AG04450 (cell line): ENCODE measurements at regions of chr19 and their contacts with region 1.

Region 1: DNA sequence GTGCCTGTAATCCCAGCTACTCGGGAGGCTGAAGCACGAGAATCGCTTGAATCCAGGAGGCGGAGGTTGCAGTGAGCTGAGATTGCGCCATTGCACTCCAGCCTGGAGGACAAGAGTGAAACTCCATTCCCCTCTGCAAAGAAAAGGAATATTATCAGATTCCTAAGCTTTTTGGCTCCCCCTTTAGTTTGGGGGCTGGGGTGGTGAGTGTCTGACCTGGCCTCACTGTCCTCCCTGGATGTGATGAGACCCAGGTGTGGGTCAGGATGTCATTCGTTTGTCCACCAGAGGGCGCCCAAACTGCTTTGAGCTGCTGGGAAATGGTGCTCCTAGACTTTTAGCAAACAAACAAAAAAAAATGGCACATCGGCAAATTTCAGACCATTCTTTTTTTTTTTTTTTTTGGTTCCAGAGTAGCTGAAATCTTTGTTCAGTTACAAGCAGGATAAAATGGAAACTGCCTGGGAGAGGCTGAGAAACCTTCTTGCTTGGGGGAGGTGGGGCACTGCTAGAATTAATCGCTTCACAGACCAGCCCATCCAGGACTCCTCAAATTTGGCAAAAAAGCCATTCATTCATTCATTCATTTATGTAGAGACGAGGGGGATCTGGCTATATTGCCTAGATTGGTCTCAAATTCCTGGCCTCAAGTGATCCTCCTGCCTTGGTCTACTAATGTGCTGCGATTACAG is 29.4 kb downstream of the SPC24 start:
- DNase-seq: peak; percentile 34
- H3K4me3 ChIP-seq: no peak overlapping the region
- H3K27ac ChIP-seq: no peak overlapping the region
- H3K27me3 ChIP-seq: no peaks in the 10 kb centered on the region
- CTCF ChIP-seq: peak; percentile 83

Region 2: DNA sequence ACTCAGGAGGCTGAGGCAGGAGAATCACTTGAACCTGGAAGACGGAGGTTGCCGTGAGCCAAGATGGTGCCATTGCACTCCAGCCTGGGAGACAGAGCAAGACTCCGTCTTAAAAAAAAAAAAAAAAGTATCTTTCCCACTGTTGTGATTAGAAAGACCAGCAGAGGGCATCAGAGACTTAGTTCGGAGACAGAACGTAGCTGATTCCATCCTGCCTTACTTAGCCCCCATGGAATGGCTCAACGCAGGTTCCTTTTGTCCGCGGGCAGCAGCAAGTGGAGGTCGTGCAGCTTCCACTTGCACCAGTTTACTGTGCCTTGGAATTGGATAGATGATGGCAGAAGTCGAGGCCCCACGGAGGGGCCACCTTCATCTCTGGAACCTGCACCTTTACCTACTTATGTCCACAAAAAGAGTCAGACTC is 189.5 kb before region 1 on chr19:
- CTCF ChIA-PET with region 1: interaction called, 22 read pairs
- POLR2A ChIA-PET with region 1: no interaction called
- DNase-seq: peak; percentile 71
- H3K4me3 ChIP-seq: no peak overlapping the region
- H3K27ac ChIP-seq: no peak overlapping the region
- H3K27me3 ChIP-seq: no peaks in the 10 kb centered on the region
- CTCF ChIP-seq: peak; percentile 69

Region 3: DNA sequence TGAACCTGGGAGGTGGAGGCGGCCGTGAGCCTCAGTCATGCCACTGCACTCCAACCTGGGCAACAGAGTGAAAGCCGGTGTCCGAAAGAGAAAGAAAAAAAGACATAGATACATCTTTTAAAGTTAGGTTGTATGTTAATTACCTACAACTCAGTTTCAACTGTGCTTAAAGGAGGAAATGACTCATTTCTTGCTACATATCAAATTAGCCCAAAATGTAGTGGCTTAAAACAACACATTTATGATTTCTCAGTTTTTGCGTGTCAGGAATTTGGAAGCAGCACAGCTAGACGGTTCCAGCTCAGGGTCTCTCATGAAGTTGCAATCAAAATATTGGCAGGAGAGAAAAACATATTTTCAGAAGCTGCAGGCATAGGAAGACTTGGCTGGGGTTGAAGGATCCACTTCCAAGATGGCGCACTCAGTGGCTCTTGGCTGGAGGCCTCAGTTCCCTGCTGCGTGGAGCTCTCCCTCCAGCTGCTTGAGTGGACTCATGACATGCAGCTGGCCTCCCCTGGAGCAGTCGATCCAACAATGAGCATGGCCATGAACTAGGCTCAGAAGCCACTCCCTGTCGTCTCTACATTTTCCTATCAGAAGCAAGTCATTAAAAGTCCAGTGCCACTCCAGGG is 29.8 kb before region 1 on chr19:
- CTCF ChIA-PET with region 1: interaction called, 15 read pairs
- POLR2A ChIA-PET with region 1: no interaction called
- DNase-seq: no peak
- H3K4me3 ChIP-seq: no peak overlapping the region
- H3K27ac ChIP-seq: peak overlapping the region; percentile 52
- H3K27me3 ChIP-seq: no peaks in the 10 kb centered on the region
- CTCF ChIP-seq: no peak

Region 4: DNA sequence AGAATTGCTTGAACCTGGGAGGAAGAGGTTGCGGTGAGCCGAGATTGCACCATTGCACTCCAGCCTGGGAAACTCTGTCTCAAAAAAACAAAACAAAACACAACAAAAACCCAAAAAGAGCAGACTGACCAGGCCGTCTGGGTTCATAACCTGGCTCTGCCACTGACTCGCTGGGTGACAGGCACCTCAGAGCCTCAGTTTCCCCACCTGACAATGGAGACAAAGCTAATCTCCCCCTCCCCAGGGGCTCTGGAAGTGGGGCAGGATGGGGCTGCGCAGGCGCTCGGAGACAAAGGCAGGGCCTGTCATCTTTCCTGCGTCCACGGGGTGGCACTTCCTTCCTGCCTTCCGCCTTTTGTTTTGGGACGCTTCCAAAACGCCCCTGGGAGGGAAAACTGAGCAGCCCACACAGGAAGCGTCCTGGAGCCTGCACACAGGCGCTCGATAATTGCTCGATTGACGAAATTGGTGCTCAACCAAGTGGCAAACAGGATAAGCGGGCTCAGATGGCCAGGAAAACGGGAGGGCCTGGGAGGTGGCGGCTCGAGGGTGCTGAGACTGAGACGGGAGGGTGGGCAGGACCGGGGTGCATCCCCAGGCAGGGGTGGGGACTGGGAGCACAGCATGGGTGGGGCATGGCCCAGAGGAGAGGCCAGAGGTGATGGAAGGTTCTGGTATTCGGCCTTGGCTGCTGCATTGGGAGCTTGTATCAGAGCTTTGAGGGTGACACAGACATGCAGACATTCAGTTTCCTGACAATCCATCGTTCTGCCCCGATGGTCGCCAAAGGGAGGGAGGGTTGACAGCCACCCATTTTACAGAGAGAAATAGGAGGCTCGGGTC is 11.6 kb after region 1 on chr19:
- CTCF ChIA-PET with region 1: interaction called, 16 read pairs
- POLR2A ChIA-PET with region 1: no interaction called
- DNase-seq: peak; percentile 69
- H3K4me3 ChIP-seq: peak overlapping the region; percentile 31; the same call in 1 of the 2 replicates
- H3K27ac ChIP-seq: peak overlapping the region; percentile 61
- H3K27me3 ChIP-seq: no peaks in the 10 kb centered on the region
- CTCF ChIP-seq: peak; percentile 83

Region 5: DNA sequence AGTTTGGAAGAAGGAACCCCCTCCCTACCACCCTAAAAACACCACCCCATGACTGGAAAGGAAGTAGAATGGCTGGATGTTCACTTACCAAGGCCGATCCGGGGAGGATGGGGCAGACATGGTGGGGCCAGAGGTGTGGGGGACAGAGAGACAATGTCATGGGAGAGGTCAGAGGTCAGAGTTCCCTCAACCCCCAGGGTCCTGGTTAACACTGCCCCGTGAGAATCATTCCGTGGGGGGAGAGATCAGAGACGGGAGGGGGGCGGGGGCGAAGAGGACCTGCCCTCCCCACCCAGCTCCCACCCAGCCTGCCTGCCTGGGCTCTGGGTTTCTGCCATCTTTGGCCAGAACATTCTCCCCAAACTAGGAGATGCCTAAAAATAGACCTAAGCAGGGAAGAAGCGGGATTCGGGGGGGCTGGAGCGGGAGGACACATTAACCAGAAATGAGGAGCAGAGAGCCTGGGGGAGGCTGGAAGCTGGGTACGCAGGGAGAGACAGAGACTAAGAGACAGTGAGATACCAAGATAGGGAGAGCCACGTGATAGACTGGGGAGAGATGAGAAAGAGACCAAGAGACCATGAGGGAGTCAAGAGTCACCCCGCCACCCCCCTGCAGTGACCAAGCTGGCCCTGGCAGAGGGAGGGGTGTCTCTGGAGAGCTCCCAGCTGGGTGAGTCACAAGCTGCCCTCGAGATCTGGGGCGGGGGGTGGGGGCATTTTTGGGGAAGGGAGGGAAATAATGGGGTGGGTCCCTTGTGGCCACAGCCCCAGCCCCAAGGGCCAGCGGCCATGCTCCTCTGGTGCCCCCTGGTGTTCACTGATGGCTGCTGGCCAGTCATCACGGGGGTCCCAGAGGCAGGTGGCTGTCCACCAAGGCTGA is 77.3 kb after region 1 on chr19:
- CTCF ChIA-PET with region 1: interaction called, 49 read pairs
- POLR2A ChIA-PET with region 1: no interaction called
- DNase-seq: peak; percentile 30
- H3K4me3 ChIP-seq: no peak overlapping the region
- H3K27ac ChIP-seq: peak overlapping the region; percentile 73
- H3K27me3 ChIP-seq: no peaks in the 10 kb centered on the region
- CTCF ChIP-seq: peak; percentile 87